ENCODE measurements at regions of chr1 and their contacts with region 1.

Region 1: GRCh38 chr1:46247436-46248121 is at the start of gene RAD54L:
- DNase-seq: peak; percentile 94 to 98 (median 96)
- H3K4me3 ChIP-seq: peak within 1 kb of the TSS; percentile 85 to 91
- H3K4me3 Mint-ChIP-seq: peak within 1 kb of the TSS; percentile 89 to 95 (median 92)
- H3K27ac ChIP-seq: peak within 1 kb of the TSS; percentile 53
- H3K27ac Mint-ChIP-seq: peak within 1 kb of the TSS; percentile 61 to 90 (median 87)
- H3K4me1 ChIP-seq: peaks cover 13% of the 10 kb centered on the region
- H3K4me1 Mint-ChIP-seq: peaks cover 11 to 16% (median 14%) of the 10 kb centered on the region in 4 donors
- H3K27me3 ChIP-seq: no peaks in the 10 kb centered on the region
- H3K27me3 Mint-ChIP-seq: no peaks in the 10 kb centered on the region
- total RNA-seq, gene RAD54L: 1.0 to 1.1 TPM

Region 2: DNA sequence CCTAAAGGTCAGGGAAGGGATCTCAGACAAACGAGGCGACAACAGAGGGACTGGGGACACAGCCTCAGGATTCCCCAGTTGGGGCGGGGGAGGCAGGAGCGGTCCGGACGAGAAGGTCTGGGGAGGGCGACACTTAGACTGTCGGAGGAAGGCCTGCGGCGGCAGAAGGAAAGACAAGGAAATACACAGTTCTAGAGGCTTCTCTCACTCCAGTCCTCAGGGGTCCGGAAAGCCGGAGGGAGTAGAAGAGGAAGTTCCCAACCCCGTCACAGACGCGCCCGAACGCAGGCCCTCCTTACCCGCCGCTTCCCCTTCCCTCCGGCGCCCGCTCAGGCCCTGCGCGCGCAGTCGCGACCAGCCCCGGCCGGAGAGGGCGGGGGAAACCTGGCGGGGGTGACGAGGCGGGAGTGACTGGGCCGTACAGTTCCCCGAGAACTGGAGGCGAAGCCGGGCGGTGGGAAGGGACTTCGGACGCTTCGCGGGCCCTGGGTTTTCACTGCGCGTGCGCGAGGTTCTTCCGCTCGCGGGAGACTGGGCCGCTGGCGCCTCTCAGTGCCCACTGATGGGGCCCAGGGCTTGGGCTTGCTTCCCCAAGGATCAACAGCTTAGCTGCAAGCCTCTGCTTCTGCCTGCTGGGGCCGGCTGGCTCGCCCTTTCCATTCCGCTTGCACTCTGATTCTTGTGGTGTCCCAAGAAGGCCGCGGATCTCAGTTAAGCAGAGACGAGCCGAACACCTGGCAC is 497.1 kb before region 1 on chr1 and contains the start of gene IPP:
- CTCF ChIA-PET with region 1: no interaction called
- POLR2A ChIA-PET with region 1: no interaction called
- intact Hi-C with region 1: loop called (anchors 1 kb)
- DNase-seq: peak; percentile 89 to 92 (median 90)
- H3K4me3 ChIP-seq: peak within 1 kb of the TSS; percentile 84 to 86
- H3K4me3 Mint-ChIP-seq: peak within 1 kb of the TSS; percentile 94 to 100 (median 98)
- H3K27ac ChIP-seq: peak within 1 kb of the TSS; percentile 93
- H3K27ac Mint-ChIP-seq: peak within 1 kb of the TSS; percentile 98 to 100 (median 99)
- H3K4me1 ChIP-seq: peaks cover 22% of the 10 kb centered on the region
- H3K4me1 Mint-ChIP-seq: peaks cover 15 to 44% (median 30%) of the 10 kb centered on the region in 4 donors
- H3K27me3 ChIP-seq: no peaks in the 10 kb centered on the region
- H3K27me3 Mint-ChIP-seq: no peaks in the 10 kb centered on the region
- total RNA-seq, gene IPP: 17.3 to 19.7 TPM

Region 3: DNA sequence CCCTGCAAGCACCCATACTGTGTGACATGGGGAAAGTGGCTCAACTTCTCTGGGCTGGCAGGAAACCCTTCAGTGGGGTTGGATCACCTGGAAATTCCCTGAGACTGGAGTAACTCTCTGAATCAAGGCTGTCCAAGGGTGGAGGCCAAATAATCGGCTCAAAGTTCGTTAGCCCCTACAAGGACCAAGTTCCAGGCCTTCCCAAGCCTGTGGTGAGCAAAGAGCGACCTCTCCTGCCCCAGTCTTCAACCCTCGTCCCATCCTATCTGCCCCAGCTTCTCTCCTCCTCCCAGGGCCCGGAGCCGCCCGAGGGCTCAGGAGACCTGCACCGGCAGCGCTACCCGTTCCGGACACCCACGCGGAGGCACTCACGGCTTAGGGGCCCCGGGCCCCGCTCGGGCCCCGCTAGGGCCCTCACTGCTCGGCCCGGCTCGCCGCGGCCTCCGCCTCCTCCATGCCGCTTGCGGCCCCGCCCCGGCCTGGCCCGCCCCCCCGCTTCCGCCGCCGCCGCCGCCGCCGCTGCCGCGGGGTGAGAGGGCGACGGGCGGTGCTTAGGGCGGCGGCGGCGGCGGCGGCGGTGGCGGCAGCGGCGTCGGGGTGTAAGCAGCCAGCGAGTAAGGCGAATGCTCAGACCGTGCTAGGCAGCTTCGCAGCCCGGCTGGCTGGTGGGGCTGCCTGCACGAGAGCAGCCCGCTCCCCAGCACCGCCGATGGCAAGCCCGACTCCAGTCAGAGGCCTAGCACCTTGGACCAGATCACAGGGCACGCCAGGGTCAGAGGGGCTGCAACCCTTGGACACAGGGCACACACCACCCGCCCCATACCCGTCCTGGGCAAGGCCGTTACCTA is 49.4 kb before region 1 on chr1 and contains the start of gene POMGNT1:
- CTCF ChIA-PET with region 1: no interaction called
- POLR2A ChIA-PET with region 1: interaction called, 3 read pairs
- intact Hi-C with region 1: loop called (anchors 2 kb)
- DNase-seq: peak; percentile 69 to 81 (median 78)
- H3K4me3 ChIP-seq: peak within 1 kb of the TSS; percentile 78 to 86
- H3K4me3 Mint-ChIP-seq: peak within 1 kb of the TSS; percentile 83 to 89 (median 88)
- H3K27ac ChIP-seq: peak within 1 kb of the TSS; percentile 76
- H3K27ac Mint-ChIP-seq: peak within 1 kb of the TSS; percentile 38 to 88 (median 79)
- H3K4me1 ChIP-seq: peaks cover 33% of the 10 kb centered on the region
- H3K4me1 Mint-ChIP-seq: peaks cover 12 to 39% (median 25%) of the 10 kb centered on the region in 4 donors
- H3K27me3 ChIP-seq: no peaks in the 10 kb centered on the region
- H3K27me3 Mint-ChIP-seq: peaks cover 0 to 1% of the 10 kb centered on the region in 2 donors
- total RNA-seq, gene POMGNT1: 36.0 to 41.4 TPM

Region 4: GRCh38 chr1:46211051-46211450 is 36.5 kb before region 1 on chr1:
- CTCF ChIA-PET with region 1: no interaction called
- POLR2A ChIA-PET with region 1: no interaction called
- intact Hi-C with region 1: no loop called
- DNase-seq: no peak
- H3K4me3 ChIP-seq: no peak overlapping the region
- H3K4me3 Mint-ChIP-seq: no peak overlapping the region
- H3K27ac ChIP-seq: no peak overlapping the region
- H3K27ac Mint-ChIP-seq: no peak overlapping the region
- H3K4me1 ChIP-seq: no peaks in the 10 kb centered on the region
- H3K4me1 Mint-ChIP-seq: no peaks in the 10 kb centered on the region
- H3K27me3 ChIP-seq: no peaks in the 10 kb centered on the region
- H3K27me3 Mint-ChIP-seq: peaks cover 0 to 1% of the 10 kb centered on the region in 2 donors

Region 5: DNA sequence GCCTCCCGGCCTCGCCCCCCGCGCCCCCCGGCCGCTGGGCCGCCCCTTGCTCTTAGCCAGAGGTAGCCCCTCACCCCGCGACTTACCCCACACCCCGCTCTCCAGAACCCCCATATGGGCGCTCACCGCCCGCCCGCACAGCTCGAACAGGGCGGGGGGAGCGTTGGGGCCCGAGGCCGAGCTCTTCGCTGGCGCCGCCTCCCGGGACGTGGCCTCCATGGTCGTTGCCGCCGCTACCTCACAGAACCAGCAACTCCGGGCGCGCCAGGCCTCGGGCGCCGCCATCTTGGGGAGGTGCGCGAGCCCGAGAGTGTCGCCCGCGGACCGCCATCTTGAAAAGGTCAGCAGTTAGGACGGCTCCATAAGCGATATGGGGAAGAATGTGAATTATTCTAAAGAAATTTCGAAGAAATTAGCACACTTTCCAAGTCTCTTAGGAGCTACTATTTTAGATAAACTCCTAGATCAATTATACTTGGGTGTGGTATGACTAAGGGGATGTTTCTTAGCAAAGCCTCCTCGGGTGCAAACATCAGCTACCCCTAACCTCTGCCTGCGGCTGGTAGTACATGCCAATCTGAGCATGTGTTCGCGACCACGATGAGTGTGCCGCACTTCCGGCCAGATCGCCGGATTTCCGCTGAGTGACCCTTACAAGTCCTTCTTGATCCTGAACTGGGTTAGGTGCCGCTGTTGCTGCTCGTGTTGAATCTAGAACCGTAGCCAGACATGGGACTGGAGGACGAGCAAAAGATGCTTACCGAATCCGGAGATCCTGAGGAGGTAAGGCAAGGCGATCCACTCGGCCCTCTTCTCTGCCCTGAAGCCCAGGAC is 55.7 kb after region 1 on chr1 and contains the starts of genes LRRC41 and UQCRH:
- CTCF ChIA-PET with region 1: interaction called, 8 read pairs
- POLR2A ChIA-PET with region 1: interaction called, 27 read pairs
- intact Hi-C with region 1: loop called (anchors 1 kb)
- DNase-seq: peak; percentile 94 to 96 (median 94)
- H3K4me3 ChIP-seq: peak within 1 kb of the TSS; percentile 73 to 90
- H3K4me3 Mint-ChIP-seq: peak within 1 kb of the TSS; percentile 96 to 100 (median 98)
- H3K27ac ChIP-seq: peak within 1 kb of the TSS; percentile 94
- H3K27ac Mint-ChIP-seq: peak within 1 kb of the TSS; percentile 97 to 98 (median 98)
- H3K4me1 ChIP-seq: peaks cover 54% of the 10 kb centered on the region
- H3K4me1 Mint-ChIP-seq: peaks cover 26 to 64% (median 40%) of the 10 kb centered on the region in 4 donors
- H3K27me3 ChIP-seq: no peaks in the 10 kb centered on the region
- H3K27me3 Mint-ChIP-seq: no peaks in the 10 kb centered on the region
- total RNA-seq, gene LRRC41: 31.8 to 32.0 TPM
- total RNA-seq, gene UQCRH: 123 to 128 TPM

Region 6: GRCh38 chr1:46340404-46341221 is 93.0 kb after region 1 on chr1 and contains the start of gene NSUN4:
- CTCF ChIA-PET with region 1: interaction called, 60 read pairs
- POLR2A ChIA-PET with region 1: interaction called, 8 read pairs
- intact Hi-C with region 1: loop called (anchors 1 kb)
- DNase-seq: peak; percentile 87 to 93 (median 88)
- H3K4me3 ChIP-seq: peak within 1 kb of the TSS; percentile 89 to 100
- H3K4me3 Mint-ChIP-seq: peak within 1 kb of the TSS; percentile 99 to 100 (median 100)
- H3K27ac ChIP-seq: peak within 1 kb of the TSS; percentile 97
- H3K27ac Mint-ChIP-seq: peak within 1 kb of the TSS; percentile 95 to 100 (median 100)
- H3K4me1 ChIP-seq: peaks cover 22% of the 10 kb centered on the region
- H3K4me1 Mint-ChIP-seq: peaks cover 25 to 50% (median 36%) of the 10 kb centered on the region in 4 donors
- H3K27me3 ChIP-seq: no peaks in the 10 kb centered on the region
- H3K27me3 Mint-ChIP-seq: no peaks in the 10 kb centered on the region
- total RNA-seq, gene NSUN4: 26.4 to 26.9 TPM

Region 7: GRCh38 chr1:46489638-46490405 is 242.2 kb after region 1 on chr1 and contains the start of gene DMBX1:
- CTCF ChIA-PET with region 1: no interaction called
- POLR2A ChIA-PET with region 1: no interaction called
- intact Hi-C with region 1: no loop called
- DNase-seq: peak in 1 of 5 donors; percentile 16
- H3K4me3 ChIP-seq: peak within 1 kb of the TSS in 1 of 2 donors; percentile 24
- H3K4me3 Mint-ChIP-seq: peak within 1 kb of the TSS; percentile 77 to 87 (median 82)
- H3K27ac ChIP-seq: no peak within 1 kb of the TSS
- H3K27ac Mint-ChIP-seq: peak within 1 kb of the TSS in 3 of 7 donors; percentile 61 to 81 (median 72)
- H3K4me1 ChIP-seq: peaks cover 15% of the 10 kb centered on the region
- H3K4me1 Mint-ChIP-seq: peaks cover 12 to 26% (median 19%) of the 10 kb centered on the region in 4 donors
- H3K27me3 ChIP-seq: peaks cover 34% of the 10 kb centered on the region
- H3K27me3 Mint-ChIP-seq: peaks cover 62 to 71% of the 10 kb centered on the region in 2 donors
- total RNA-seq, gene DMBX1: not detected